GM10248 (cell line): ENCODE measurements at regions of chr5 and their contacts with region 1.

Region 1: DNA sequence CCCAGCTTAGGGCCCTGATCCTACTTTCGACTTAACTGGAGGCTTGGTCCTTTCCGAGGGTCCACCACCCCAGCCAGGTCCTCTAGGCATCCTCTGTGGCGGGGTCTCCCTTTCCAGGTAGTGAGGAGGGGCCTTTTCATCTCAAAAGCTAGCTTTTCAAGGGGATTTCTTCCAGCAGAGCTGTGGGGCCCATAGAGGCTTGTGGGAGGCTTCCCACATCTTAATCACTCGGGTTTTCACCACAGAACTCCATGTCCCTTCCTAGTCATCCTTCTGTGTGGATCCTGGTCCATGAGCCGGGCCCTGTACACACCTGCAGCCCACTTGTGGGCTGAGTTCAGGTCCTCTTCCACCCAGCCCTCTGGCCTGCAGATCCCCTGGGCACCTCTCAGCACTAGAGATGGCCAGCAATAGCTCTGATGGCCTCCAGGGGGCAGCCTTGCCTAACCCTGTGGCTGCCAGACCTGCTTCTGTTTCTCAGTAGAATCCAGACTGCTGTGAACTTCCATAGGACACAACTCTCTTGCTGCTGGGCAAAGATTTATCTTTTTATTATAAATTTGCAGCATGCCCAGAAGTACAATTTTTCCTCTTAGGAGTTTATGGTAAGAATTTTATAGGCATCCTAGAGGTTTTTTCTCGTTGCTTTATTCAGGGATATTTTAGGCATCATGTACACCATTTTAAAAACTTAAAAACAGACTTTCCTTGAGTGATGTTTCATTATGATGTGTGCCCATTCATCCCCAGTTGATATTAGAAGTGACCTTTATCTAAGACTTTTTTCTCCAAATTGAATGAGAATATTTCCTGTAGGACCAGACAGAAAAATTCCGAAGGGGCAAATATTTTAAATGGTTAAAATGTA is 208.9 kb downstream of the TRIO start:
- DNase-seq: peak; percentile 78
- CTCF ChIP-seq: peak; percentile 98

Region 2: DNA sequence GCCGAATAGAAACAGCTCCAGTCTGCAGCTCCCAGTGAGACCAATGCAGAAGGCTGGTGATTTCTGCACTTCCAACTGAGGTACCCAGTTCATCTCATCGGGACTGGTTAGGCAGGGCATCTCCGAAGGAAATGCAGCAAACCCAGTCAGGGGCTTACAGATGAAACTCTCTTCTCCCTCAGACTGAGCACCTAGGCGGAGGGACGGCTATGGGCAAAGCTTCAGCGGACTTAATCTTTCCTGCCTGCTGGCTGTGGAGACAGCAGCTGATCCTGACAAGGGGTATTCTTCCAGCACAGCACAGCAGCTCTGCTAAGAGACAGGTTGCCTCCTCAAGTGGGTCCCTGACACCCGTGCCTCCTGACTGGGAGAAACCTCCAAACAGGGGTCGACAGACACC is 738.5 kb before region 1 on chr5:
- CTCF ChIA-PET with region 1: no interaction called
- POLR2A ChIA-PET with region 1: no interaction called
- DNase-seq: no peak
- CTCF ChIP-seq: no peak

Region 3: DNA sequence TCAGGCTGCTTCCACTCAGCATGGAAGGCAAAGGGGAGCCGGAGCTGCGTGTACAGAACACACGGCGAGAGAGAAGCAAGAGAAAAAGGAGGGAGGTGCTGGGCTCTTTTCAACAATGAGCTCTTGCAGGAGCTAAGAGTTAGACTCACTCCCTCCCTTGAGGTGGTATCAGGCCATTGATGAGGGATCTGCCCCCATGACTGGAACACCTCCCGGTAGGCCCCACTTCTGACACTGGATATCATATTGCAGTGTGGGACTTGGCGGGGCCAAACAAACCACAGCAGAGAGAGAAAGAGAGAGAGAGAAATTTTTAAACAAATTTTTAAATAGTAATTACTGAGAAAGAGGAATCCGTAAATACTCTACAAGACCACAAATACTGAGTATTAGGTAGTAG is 26.7 kb before region 1 on chr5:
- CTCF ChIA-PET with region 1: interaction called, 11 read pairs
- POLR2A ChIA-PET with region 1: interaction called, 3 read pairs
- DNase-seq: no peak
- CTCF ChIP-seq: no peak

Region 4: DNA sequence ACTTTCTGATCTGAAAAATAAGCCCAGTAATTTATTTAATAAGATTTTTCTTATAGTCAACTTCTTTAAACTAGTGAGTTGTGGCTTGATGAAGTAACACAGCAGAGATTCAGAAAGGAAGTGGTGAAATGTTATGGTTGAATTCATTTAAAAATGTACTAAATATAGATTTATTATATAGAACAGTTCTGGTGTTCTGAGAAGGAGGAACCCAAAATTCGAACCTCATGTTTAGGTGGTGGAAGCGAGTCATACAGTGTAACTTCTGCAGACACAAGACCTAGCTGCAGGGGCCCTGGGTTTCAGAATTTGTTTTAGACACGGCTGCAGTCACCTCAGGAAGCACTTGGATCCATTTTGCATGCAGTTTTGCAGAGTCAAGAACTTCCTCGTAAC is 20.7 kb before region 1 on chr5:
- CTCF ChIA-PET with region 1: interaction called, 13 read pairs
- POLR2A ChIA-PET with region 1: no interaction called
- DNase-seq: no peak
- CTCF ChIP-seq: no peak

Region 5: DNA sequence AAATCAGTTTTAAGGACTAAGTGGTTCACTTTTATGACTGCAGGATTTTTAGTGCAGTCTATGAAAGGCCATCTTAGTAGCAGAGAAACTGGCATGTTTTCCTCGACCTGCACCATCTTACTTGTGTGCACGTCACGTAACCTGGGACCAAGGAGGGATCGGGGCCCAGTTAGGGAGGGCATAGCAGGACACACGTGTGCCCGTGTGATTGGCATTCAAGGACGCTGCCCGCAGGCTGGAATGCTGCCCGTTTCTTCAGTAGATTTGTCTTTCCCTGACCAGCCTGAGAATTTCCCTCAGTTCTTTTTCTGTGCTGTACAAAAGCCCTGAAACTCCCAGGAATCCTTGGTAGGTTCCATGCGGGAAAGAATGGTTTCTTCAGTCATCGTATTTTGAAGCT is 12.6 kb before region 1 on chr5:
- CTCF ChIA-PET with region 1: interaction called, 15 read pairs
- POLR2A ChIA-PET with region 1: interaction called, 4 read pairs
- DNase-seq: no peak
- CTCF ChIP-seq: no peak

Region 6: GRCh38 chr5:14364576-14365472 is 12.7 kb after region 1 on chr5:
- CTCF ChIA-PET with region 1: interaction called, 25 read pairs
- POLR2A ChIA-PET with region 1: no interaction called
- DNase-seq: no peak
- CTCF ChIP-seq: peak; percentile 21

Region 7: GRCh38 chr5:14374100-14374499 is 22.0 kb after region 1 on chr5:
- CTCF ChIA-PET with region 1: interaction called, 15 read pairs
- POLR2A ChIA-PET with region 1: no interaction called
- DNase-seq: no peak
- CTCF ChIP-seq: no peak

Region 8: DNA sequence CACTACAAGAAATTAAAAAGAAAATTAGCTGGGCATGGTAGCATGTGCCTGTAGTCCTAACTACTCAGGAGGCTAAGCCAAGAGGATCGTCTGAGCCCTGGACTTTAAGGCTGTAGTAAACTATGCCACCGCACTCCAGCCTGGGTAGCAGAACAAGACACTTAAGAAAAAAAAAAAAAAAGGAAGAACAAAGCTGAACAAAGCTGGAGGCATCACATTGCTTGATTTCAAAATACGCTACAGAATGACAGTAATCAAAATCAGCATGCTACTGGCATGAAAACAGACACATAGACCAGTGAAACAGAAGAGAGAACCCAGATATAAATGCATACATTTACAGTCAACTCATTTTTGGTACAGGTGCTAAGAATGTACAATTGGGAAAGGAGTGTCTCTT is 298.0 kb after region 1 on chr5:
- CTCF ChIA-PET with region 1: interaction called, 61 read pairs
- POLR2A ChIA-PET with region 1: no interaction called
- DNase-seq: no peak
- CTCF ChIP-seq: no peak